ENCODE measurements at regions of chr12 and their contacts with region 1.

Region 1: GRCh38 chr12:19833775-19834501 is 394.6 kb downstream of the AEBP2 start:
- DNase-seq: no peak
- H3K4me3 Mint-ChIP-seq: no peak overlapping the region
- H3K27ac Mint-ChIP-seq: peak overlapping the region; percentile 75
- H3K4me1 Mint-ChIP-seq: peaks cover 37% of the 10 kb centered on the region
- H3K27me3 Mint-ChIP-seq: no peaks in the 10 kb centered on the region

Region 2: DNA sequence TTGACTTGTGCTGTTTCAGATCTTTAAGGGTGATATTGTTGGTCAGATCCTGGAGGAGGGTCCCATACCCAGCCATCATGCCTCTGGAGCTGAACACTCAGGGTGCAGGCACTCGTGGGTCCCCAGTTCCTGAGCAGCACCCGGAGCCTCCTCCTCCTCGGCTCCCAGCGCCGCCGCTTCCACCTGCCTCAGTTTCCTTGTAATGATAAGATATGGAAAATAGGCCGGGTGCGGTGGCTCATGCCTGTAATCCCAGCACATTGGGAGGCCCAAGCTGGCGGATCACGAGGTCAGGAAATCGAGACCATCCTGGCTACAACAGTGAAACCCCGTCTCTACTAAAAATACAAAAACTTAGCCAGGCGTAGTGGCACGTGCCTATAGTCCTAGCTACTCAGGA is 414.9 kb before region 1 on chr12:
- intact Hi-C with region 1: no loop called
- DNase-seq: no peak
- H3K4me3 Mint-ChIP-seq: no peak overlapping the region
- H3K27ac Mint-ChIP-seq: no peak overlapping the region
- H3K4me1 Mint-ChIP-seq: peaks cover 6% of the 10 kb centered on the region
- H3K27me3 Mint-ChIP-seq: no peaks in the 10 kb centered on the region

Region 3: GRCh38 chr12:19431407-19432308 is 402.3 kb before region 1 on chr12:
- intact Hi-C with region 1: loop called (anchors 1 kb)
- DNase-seq: peak; percentile 27
- H3K4me3 Mint-ChIP-seq: peak overlapping the region; percentile 38
- H3K27ac Mint-ChIP-seq: peak overlapping the region; percentile 100
- H3K4me1 Mint-ChIP-seq: peaks cover 47% of the 10 kb centered on the region
- H3K27me3 Mint-ChIP-seq: no peaks in the 10 kb centered on the region

Region 4: GRCh38 chr12:19675361-19675760 is 158.6 kb before region 1 on chr12:
- intact Hi-C with region 1: loop called (anchors 1 kb)
- DNase-seq: no peak
- H3K4me3 Mint-ChIP-seq: no peak overlapping the region
- H3K27ac Mint-ChIP-seq: peak overlapping the region; percentile 69
- H3K4me1 Mint-ChIP-seq: peaks cover 37% of the 10 kb centered on the region
- H3K27me3 Mint-ChIP-seq: no peaks in the 10 kb centered on the region

Region 5: GRCh38 chr12:19757317-19757877 is 76.5 kb before region 1 on chr12:
- intact Hi-C with region 1: loop called (anchors 1 kb)
- DNase-seq: no peak
- H3K4me3 Mint-ChIP-seq: no peak overlapping the region
- H3K27ac Mint-ChIP-seq: no peak overlapping the region
- H3K4me1 Mint-ChIP-seq: peaks cover 14% of the 10 kb centered on the region
- H3K27me3 Mint-ChIP-seq: no peaks in the 10 kb centered on the region

Region 6: DNA sequence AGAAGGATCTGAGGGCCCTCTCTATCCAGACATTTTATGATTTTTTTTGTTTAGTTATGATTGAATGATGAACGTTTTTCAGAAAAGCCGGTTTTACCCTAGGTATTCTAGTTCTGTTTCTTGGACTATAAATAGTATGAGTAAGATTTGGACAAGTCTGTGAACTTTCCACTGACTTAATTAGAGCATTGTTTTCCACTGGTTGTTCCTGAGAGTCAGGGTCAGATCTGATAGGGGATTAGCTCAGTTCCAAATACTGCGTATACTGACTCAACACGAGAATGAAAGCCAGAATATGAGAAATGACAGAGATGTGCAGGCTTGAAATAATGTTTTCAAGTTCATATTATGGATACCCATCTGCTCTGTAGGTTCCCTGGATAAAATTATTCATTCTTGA is 33.1 kb before region 1 on chr12:
- intact Hi-C with region 1: loop called (anchors 1 kb)
- DNase-seq: no peak
- H3K4me3 Mint-ChIP-seq: no peak overlapping the region
- H3K27ac Mint-ChIP-seq: peak overlapping the region; percentile 83
- H3K4me1 Mint-ChIP-seq: peaks cover 21% of the 10 kb centered on the region
- H3K27me3 Mint-ChIP-seq: no peaks in the 10 kb centered on the region

Region 7: GRCh38 chr12:19885092-19885812 is 51.3 kb after region 1 on chr12:
- intact Hi-C with region 1: no loop called
- DNase-seq: no peak
- H3K4me3 Mint-ChIP-seq: no peak overlapping the region
- H3K27ac Mint-ChIP-seq: no peak overlapping the region
- H3K4me1 Mint-ChIP-seq: peaks cover under 1% of the 10 kb centered on the region
- H3K27me3 Mint-ChIP-seq: no peaks in the 10 kb centered on the region

Region 8: GRCh38 chr12:19915392-19916195 is 81.7 kb after region 1 on chr12:
- intact Hi-C with region 1: no loop called
- DNase-seq: no peak
- H3K4me3 Mint-ChIP-seq: no peak overlapping the region
- H3K27ac Mint-ChIP-seq: no peak overlapping the region
- H3K4me1 Mint-ChIP-seq: peaks cover 1% of the 10 kb centered on the region
- H3K27me3 Mint-ChIP-seq: no peaks in the 10 kb centered on the region

Region 9: DNA sequence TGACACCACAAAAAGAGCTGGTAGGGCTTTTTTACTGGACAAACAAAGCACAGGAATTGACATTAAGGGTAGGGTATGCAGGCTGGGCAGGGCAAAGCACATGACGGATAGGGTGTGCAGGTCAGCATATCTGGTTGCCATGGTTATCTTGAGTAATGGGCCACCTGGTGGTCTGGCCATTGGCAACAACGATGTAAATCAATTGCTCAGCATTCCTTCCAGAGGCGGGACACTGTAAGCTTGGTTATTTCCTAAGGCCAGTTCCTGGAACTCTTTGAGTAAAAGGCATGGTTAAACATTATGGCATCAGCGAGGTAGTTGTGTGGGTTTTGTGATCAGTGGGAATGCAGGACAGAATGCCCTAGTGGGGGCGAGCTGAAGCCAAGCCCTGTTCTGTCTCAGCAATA is 137.5 kb after region 1 on chr12:
- intact Hi-C with region 1: loop called (anchors 10 kb)
- DNase-seq: no peak
- H3K4me3 Mint-ChIP-seq: no peak overlapping the region
- H3K27ac Mint-ChIP-seq: no peak overlapping the region
- H3K4me1 Mint-ChIP-seq: peaks cover 8% of the 10 kb centered on the region
- H3K27me3 Mint-ChIP-seq: no peaks in the 10 kb centered on the region

Region 10: DNA sequence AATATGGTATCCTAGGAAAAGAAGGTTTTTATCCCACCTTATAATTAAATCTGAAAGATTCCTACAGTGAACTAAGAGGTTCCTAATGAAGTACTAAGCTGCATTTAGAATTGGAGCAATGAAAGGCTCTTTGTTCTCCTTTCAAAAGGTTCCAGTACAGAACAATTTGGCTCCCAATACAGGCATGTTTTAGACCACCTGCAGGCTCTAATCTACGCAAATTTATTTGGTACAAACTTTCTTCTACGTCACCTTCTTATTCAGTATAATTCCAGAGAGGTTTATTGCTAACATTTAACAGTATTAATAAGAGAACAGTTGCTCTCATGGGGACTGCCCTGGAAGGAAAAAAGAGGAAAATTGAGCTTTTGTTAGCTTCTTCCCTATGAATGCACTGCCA is 823.6 kb after region 1 on chr12:
- intact Hi-C with region 1: no loop called
- DNase-seq: no peak
- H3K4me3 Mint-ChIP-seq: no peak overlapping the region
- H3K27ac Mint-ChIP-seq: no peak overlapping the region
- H3K4me1 Mint-ChIP-seq: no peaks in the 10 kb centered on the region
- H3K27me3 Mint-ChIP-seq: no peaks in the 10 kb centered on the region